Calu3 (cell line): ENCODE measurements at regions of chr3 and their contacts with region 1.

Region 1: DNA sequence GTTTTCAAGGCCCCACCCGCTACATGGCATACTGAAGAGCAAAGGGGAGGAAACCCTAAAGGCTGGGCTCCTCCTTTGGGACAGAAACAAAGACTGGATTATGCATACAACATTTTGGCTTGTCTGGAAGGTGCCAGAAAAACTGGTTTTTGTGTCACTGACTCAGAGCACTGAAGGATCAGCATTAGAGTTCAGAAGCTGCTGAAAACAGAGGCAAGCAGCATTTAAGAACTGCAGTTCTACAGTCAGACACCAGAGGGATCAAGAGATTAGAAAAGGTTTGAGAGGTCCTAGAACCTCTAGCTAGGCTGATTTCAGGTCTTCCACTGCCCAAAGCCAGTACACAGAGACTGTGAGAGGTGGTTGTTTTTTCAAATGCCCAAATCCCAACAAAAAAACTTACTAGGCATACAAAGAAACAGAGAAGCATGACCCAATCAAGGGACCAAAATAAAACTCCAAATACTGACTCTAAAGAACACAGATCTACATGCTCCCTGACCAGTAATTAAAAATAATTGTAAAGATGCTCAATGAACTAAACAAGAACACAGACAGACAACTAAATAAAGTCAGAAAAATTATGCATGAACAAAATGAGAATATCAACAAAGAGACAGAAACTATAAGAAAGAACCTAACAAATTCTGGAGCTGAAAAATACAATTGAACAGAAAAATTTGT is 91.2 kb downstream of the SENP2 start:
- DNase-seq: peak; percentile 83
- H3K4me3 Mint-ChIP-seq: no peak overlapping the region
- H3K27ac Mint-ChIP-seq: peak overlapping the region; percentile 47
- H3K4me1 Mint-ChIP-seq: peaks cover 21% of the 10 kb centered on the region
- H3K27me3 Mint-ChIP-seq: no peaks in the 10 kb centered on the region
- CTCF ChIP-seq: peak; percentile 94

Region 2: GRCh38 chr3:184126006-184126405 is 1551.3 kb before region 1 on chr3:
- CTCF ChIA-PET with region 1: no interaction called
- intact Hi-C with region 1: no loop called
- DNase-seq: no peak
- H3K4me3 Mint-ChIP-seq: no peak overlapping the region
- H3K27ac Mint-ChIP-seq: no peak overlapping the region
- H3K4me1 Mint-ChIP-seq: no peaks in the 10 kb centered on the region
- H3K27me3 Mint-ChIP-seq: no peaks in the 10 kb centered on the region
- CTCF ChIP-seq: no peak

Region 3: DNA sequence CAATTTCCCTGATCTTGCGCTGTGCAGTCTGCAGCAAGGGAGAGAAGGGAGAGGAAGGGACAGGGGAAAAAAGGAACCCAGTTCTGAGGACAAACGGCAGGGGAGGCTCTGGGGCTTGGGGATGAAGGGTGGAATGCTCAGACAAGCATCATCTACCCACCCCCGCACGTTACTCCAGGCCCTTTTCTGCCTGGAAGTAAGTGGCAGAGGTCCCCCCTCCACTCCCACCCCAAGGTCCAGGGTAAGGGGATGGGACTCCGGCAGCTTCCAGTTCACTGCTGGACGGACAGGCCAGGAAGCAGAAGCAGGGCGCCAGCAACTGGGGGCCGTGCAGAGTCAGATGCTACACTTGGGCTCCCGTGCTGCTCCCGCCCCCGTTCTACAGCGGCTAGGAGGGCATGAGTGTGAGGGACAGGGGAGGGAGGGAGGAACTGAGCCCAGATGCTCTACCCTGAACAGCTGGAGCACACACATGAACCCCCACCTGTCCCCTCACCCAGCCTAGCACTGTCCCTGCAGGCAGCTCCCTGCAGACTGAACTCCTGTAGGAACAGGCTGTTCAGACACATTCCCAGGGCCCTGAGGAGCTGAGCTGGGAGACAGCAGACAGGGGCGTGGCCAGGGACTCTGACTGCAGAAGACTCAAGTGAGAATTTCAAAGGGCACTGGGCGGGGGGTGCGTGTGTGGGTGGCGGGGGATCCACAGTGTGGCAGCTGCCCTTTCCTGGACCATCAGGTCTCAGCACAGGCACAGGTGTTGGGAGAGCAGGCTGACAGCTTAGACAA is 31.5 kb before region 1 on chr3:
- CTCF ChIA-PET with region 1: no interaction called
- intact Hi-C with region 1: no loop called
- DNase-seq: no peak
- H3K4me3 Mint-ChIP-seq: no peak overlapping the region
- H3K27ac Mint-ChIP-seq: peak overlapping the region; percentile 12
- H3K4me1 Mint-ChIP-seq: no peaks in the 10 kb centered on the region
- H3K27me3 Mint-ChIP-seq: no peaks in the 10 kb centered on the region
- CTCF ChIP-seq: no peak

Region 4: GRCh38 chr3:185659942-185660921 is 17.1 kb before region 1 on chr3:
- CTCF ChIA-PET with region 1: interaction called, 22 read pairs
- intact Hi-C with region 1: no loop called
- DNase-seq: peak; percentile 86
- H3K4me3 Mint-ChIP-seq: no peak overlapping the region
- H3K27ac Mint-ChIP-seq: no peak overlapping the region
- H3K4me1 Mint-ChIP-seq: peaks cover 12% of the 10 kb centered on the region
- H3K27me3 Mint-ChIP-seq: no peaks in the 10 kb centered on the region
- CTCF ChIP-seq: peak; percentile 99

Region 5: GRCh38 chr3:185702262-185703225 is 25.3 kb after region 1 on chr3:
- CTCF ChIA-PET with region 1: interaction called, 16 read pairs
- intact Hi-C with region 1: no loop called
- DNase-seq: peak; percentile 78
- H3K4me3 Mint-ChIP-seq: peak overlapping the region; percentile 67
- H3K27ac Mint-ChIP-seq: peak overlapping the region; percentile 92
- H3K4me1 Mint-ChIP-seq: peaks cover 48% of the 10 kb centered on the region
- H3K27me3 Mint-ChIP-seq: no peaks in the 10 kb centered on the region
- CTCF ChIP-seq: no peak

Region 6: GRCh38 chr3:185733980-185734724 is 56.9 kb after region 1 on chr3:
- CTCF ChIA-PET with region 1: interaction called, 6 read pairs
- intact Hi-C with region 1: loop called (anchors 5 kb)
- DNase-seq: peak; percentile 82
- H3K4me3 Mint-ChIP-seq: no peak overlapping the region
- H3K27ac Mint-ChIP-seq: peak overlapping the region; percentile 28
- H3K4me1 Mint-ChIP-seq: peaks cover 52% of the 10 kb centered on the region
- H3K27me3 Mint-ChIP-seq: no peaks in the 10 kb centered on the region
- CTCF ChIP-seq: peak; percentile 92

Region 7: GRCh38 chr3:185764163-185764979 is 87.1 kb after region 1 on chr3:
- CTCF ChIA-PET with region 1: interaction called, 28 read pairs
- intact Hi-C with region 1: loop called (anchors 1 kb)
- DNase-seq: peak; percentile 33
- H3K4me3 Mint-ChIP-seq: no peak overlapping the region
- H3K27ac Mint-ChIP-seq: no peak overlapping the region
- H3K4me1 Mint-ChIP-seq: peaks cover 86% of the 10 kb centered on the region
- H3K27me3 Mint-ChIP-seq: no peaks in the 10 kb centered on the region
- CTCF ChIP-seq: no peak

Region 8: DNA sequence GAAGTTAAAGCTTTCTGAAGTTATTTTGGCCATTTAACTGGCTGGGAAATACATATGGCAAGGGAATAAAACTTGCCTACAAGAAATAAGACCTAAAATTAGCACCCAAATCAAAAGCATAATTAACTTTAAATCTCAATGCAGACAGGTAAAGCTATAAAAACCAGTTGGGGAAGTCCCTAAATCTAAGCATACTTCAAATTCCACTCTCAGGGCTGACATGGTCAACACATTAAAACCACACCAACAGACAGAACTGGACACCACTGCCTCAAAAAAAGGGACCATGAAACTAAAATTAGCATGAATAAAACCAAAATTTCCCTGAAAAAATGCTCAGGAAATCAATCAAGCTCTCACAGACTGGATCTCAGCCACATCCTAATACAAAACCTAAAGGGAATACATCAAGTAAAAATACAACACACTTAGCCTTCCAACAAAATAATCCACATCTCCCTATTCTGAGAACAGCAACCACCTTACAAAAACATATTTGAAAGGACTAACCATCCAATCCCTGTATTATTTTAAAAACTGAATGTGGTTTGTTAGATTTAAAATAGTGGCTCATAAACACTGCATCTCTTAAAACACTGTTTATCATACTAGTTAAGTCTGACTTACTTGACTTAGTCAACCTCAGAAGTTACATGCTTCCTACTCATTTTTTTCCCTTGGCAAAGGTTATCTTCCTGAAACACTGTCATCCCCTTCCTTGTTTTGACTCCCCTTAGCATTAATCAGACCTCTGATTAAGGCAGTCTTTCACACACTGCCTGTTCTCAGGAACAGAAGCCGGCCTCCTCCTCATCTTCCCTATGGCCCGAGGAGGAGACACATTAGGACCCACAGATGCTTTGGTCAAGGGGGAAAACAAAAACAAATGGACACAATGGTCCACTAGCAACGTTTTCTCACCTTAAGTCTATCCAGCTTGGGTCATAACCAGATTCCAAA is 252.2 kb after region 1 on chr3:
- CTCF ChIA-PET with region 1: no interaction called
- intact Hi-C with region 1: loop called (anchors 5 kb)
- DNase-seq: no peak
- H3K4me3 Mint-ChIP-seq: peak overlapping the region; percentile 95
- H3K27ac Mint-ChIP-seq: peak overlapping the region; percentile 41
- H3K4me1 Mint-ChIP-seq: peaks cover 89% of the 10 kb centered on the region
- H3K27me3 Mint-ChIP-seq: no peaks in the 10 kb centered on the region
- CTCF ChIP-seq: no peak